B cell (primary cell): ENCODE measurements at regions of chr14 and their contacts with region 1.

Region 1: DNA sequence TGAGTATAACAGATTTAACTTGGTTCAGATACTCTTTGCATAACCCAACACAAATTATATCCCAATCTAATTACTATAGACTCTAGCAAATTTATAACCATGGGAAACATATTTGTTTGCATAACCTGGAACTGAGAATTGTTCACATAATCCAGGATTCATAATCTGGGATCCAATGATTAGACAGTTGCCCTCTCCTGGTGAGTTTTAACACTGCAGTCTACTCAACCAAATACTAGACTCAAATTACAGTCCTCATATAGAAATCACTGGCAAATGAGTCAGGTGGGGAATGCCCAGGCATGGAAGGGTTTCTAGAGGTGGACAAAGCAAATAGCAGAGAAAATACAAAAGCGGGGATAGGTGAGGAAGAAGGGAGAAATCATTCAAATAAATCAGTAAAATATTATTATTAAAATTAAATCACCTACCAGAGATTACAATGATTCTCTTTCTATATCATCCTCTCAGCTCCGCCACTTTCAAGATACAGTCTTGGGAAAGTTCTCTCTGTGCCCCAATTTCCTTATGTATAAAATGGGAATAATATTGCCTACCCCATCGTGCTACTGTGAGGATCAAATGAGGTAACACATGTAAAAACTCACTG is 9.4 kb downstream of the GCH1 start:
- DNase-seq: peak; percentile 60
- ATAC-seq: peak; percentile 75
- H3K4me3 ChIP-seq: no peak overlapping the region
- H3K4me3 Mint-ChIP-seq: no peak overlapping the region
- H3K27ac ChIP-seq: no peak overlapping the region
- H3K27ac Mint-ChIP-seq: no peak overlapping the region
- H3K4me1 ChIP-seq: peaks cover 5 to 10% of the 10 kb centered on the region in 2 donors
- H3K4me1 Mint-ChIP-seq: peaks cover 29% of the 10 kb centered on the region
- H3K27me3 ChIP-seq: no peaks in the 10 kb centered on the region
- H3K27me3 Mint-ChIP-seq: no peaks in the 10 kb centered on the region
- CTCF ChIP-seq: peak; percentile 89

Region 2: GRCh38 chr14:54805521-54806322 is 87.5 kb before region 1 on chr14:
- CTCF ChIA-PET with region 1: interaction called, 5 read pairs
- POLR2A ChIA-PET with region 1: no interaction called
- intact Hi-C with region 1: loop called (anchors 10 kb)
- DNase-seq: peak; percentile 84
- ATAC-seq: peak; percentile 86
- H3K4me3 ChIP-seq: no peak overlapping the region
- H3K4me3 Mint-ChIP-seq: no peak overlapping the region
- H3K27ac ChIP-seq: no peak overlapping the region
- H3K27ac Mint-ChIP-seq: no peak overlapping the region
- H3K4me1 ChIP-seq: peaks cover 5 to 7% of the 10 kb centered on the region in 2 donors
- H3K4me1 Mint-ChIP-seq: peaks cover 6% of the 10 kb centered on the region
- H3K27me3 ChIP-seq: peaks cover 0 to 6% (median 0%) of the 10 kb centered on the region in 4 experiments
- H3K27me3 Mint-ChIP-seq: peaks cover 20% of the 10 kb centered on the region
- CTCF ChIP-seq: peak; percentile 94

Region 3: GRCh38 chr14:54881235-54881760 is 12.0 kb before region 1 on chr14:
- CTCF ChIA-PET with region 1: interaction called, 40 read pairs
- POLR2A ChIA-PET with region 1: no interaction called
- intact Hi-C with region 1: loop called (anchors 1 kb)
- DNase-seq: peak; percentile 67
- ATAC-seq: peak; percentile 59
- H3K4me3 ChIP-seq: peak overlapping the region; percentile 27 to 76 (median 55)
- H3K4me3 Mint-ChIP-seq: peak overlapping the region; percentile 93
- H3K27ac ChIP-seq: peak overlapping the region; percentile 72 to 89
- H3K27ac Mint-ChIP-seq: peak overlapping the region; percentile 92
- H3K4me1 ChIP-seq: peaks cover 7 to 10% of the 10 kb centered on the region in 2 donors
- H3K4me1 Mint-ChIP-seq: peaks cover 35% of the 10 kb centered on the region
- H3K27me3 ChIP-seq: no peaks in the 10 kb centered on the region
- H3K27me3 Mint-ChIP-seq: no peaks in the 10 kb centered on the region
- CTCF ChIP-seq: no peak

Region 4: DNA sequence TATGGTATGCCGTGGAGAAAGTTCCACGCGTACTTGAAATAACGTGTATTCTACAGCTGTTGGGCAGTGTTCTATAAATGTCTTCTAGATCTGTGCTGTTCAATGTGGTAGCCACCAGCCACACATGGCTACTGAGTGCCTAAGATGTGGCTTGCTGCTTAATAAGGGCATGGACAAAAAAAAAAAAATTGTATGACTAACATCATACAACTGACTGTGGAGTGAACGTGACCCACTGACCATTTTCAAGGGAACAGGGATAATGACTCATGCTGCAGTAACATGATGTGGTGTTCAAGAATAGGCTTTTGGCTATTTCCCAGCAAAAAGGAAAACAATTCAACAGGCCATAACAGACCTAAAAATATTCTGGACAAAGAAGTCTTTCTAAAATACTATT is 505.4 kb after region 1 on chr14:
- CTCF ChIA-PET with region 1: no interaction called
- POLR2A ChIA-PET with region 1: no interaction called
- intact Hi-C with region 1: no loop called
- DNase-seq: no peak
- ATAC-seq: no peak
- H3K4me3 ChIP-seq: no peak overlapping the region
- H3K4me3 Mint-ChIP-seq: no peak overlapping the region
- H3K27ac ChIP-seq: no peak overlapping the region
- H3K27ac Mint-ChIP-seq: no peak overlapping the region
- H3K4me1 ChIP-seq: no peaks in the 10 kb centered on the region
- H3K4me1 Mint-ChIP-seq: peaks cover 1% of the 10 kb centered on the region
- H3K27me3 ChIP-seq: no peaks in the 10 kb centered on the region
- H3K27me3 Mint-ChIP-seq: no peaks in the 10 kb centered on the region
- CTCF ChIP-seq: no peak